ENCODE measurements at regions of chr9 and their contacts with region 1.

Region 1: GRCh38 chr9:70480405-70480980 is 66.0 kb upstream of the KLF9 start:
- DNase-seq: peak; percentile 98
- H3K4me3 ChIP-seq: peak overlapping the region; percentile 28 to 39 (median 28)
- H3K27ac ChIP-seq: peak overlapping the region; percentile 85 to 97 (median 96)
- H3K4me1 ChIP-seq: peaks cover 84 to 100% (median 95%) of the 10 kb centered on the region in 4 donors
- H3K27me3 ChIP-seq: no peaks in the 10 kb centered on the region
- CTCF ChIP-seq: no peak
- EP300 ChIP-seq: peak; percentile 99
- POLR2A ChIP-seq: peak; percentile 36

Region 2: DNA sequence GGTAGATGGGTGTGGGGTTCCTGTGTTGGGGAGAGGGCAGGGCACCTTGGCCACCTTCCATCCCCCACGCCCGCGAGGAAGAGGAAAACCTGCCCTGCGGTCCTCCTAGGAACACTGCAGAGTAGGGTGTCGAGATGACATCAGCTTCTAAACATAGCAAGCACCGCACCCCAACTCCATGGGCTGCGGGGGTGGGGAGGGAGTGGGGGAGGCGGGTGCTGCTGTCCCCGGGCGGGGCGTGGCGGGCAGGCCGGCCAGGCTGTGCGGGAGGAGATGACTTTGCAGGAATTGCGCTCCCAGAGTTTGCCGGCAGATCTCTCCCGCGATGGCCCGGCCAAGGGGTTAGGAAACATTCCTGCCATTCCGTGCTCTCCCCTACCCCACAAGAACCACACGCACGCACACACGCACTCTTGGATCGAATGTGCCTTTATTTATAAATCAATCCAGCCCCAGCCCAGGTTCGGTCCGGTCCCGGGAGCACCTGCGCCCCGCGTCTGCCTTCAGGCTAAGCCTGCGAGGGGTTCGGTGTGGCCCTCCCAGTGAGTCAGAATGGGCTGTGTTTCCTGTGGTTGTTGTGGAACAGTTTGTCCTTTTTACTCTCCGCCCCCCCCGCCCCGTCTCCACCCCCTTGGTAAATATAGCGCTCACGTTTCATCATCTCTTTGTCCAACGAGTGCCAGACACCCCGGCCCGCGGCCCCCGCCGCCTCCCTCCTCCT is 60.8 kb before region 1 on chr9:
- intact Hi-C with region 1: loop called (anchors 1 kb)
- DNase-seq: peak; percentile 100
- H3K4me3 ChIP-seq: peak overlapping the region; percentile 54 to 69 (median 56)
- H3K27ac ChIP-seq: peak overlapping the region; percentile 91 to 100 (median 100)
- H3K4me1 ChIP-seq: peaks cover 54 to 78% (median 62%) of the 10 kb centered on the region in 4 donors
- H3K27me3 ChIP-seq: no peaks in the 10 kb centered on the region
- CTCF ChIP-seq: peak in 1 of 3 experiments; percentile 29
- EP300 ChIP-seq: no peak
- POLR2A ChIP-seq: peak; percentile 88

Region 3: GRCh38 chr9:70753311-70753710 is 272.8 kb after region 1 on chr9:
- intact Hi-C with region 1: no loop called
- DNase-seq: no peak
- H3K4me3 ChIP-seq: no peak overlapping the region
- H3K27ac ChIP-seq: no peak overlapping the region
- H3K4me1 ChIP-seq: no peaks in the 10 kb centered on the region
- H3K27me3 ChIP-seq: no peaks in the 10 kb centered on the region
- CTCF ChIP-seq: no peak
- EP300 ChIP-seq: no peak
- POLR2A ChIP-seq: no peak

Measured in esophagus muscularis mucosa (tissue), 4 donors.